ENCODE measurements at regions of chr1 and their contacts with region 1.

Region 1: GRCh38 chr1:28877132-28877781 is 37.1 kb upstream of the EPB41 start:
- DNase-seq: peak; percentile 89

Region 2: GRCh38 chr1:28359592-28360239 is 517.5 kb before region 1 on chr1:
- intact Hi-C with region 1: loop called in 1 of 2 experiments (anchors 10 kb)
- DNase-seq: peak; percentile 86

Region 3: DNA sequence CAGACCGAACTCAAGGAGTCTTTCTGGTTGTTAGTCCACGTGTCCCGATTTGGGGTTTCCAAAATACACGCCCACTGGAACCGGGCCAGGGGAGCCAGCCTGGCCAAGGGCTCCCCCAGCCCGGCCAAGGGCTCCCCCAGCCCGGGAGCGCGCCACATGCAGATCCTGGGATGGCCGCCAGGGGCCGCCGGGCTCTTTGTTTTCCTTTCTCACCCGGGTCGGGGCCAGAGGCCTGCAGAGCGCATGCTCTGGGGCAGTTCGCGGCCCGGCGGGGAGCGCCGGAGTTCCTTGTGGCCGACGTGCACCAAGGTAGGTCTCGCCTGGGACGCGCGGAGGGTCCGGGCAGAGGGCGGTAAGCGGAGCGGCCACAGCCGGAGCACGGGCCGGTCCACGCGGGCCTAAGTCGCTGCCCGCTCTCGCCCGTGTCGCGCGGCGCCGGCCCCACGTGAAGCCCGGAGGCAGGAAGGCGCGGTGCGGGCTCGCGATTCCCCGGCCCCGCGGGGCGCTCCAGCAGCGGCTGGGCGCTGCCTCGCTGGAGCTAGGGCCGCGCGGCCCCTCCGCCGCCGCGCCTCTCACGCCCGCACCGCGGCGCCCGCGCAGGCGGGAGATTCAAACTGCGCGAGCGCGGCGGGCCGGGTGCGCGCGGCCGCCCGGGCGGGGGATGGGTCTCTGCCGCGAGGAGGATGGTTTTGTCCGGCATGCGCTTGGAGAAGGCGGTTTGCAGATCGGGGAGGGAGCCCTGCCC is 359.1 kb before region 1 on chr1:
- intact Hi-C with region 1: no loop called
- DNase-seq: peak; percentile 96

Region 4: DNA sequence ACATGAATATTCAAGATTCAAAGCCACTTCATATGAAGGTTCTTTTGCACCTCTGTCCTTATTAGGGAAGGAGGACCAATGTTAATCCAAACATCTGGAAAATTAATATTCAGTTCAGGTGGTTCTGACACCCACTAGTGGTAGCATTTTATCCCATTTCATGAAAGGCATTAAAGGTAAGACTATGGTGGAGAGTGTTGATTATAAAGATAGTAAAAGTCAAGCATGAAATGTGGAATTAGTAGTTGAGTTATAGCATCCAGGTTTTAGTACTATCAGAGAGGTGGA is 158.0 kb before region 1 on chr1:
- intact Hi-C with region 1: no loop called
- DNase-seq: no peak

Region 5: GRCh38 chr1:28792644-28793121 is 84.6 kb before region 1 on chr1:
- intact Hi-C with region 1: loop called (anchors 5 to 10 kb)
- DNase-seq: no peak

Region 6: GRCh38 chr1:28914228-28915030 is 37.2 kb after region 1 on chr1 and contains the start of gene EPB41:
- intact Hi-C with region 1: no loop called
- DNase-seq: peak; percentile 95
- total RNA-seq, gene EPB41: 16.6 to 21.7 TPM

Region 7: DNA sequence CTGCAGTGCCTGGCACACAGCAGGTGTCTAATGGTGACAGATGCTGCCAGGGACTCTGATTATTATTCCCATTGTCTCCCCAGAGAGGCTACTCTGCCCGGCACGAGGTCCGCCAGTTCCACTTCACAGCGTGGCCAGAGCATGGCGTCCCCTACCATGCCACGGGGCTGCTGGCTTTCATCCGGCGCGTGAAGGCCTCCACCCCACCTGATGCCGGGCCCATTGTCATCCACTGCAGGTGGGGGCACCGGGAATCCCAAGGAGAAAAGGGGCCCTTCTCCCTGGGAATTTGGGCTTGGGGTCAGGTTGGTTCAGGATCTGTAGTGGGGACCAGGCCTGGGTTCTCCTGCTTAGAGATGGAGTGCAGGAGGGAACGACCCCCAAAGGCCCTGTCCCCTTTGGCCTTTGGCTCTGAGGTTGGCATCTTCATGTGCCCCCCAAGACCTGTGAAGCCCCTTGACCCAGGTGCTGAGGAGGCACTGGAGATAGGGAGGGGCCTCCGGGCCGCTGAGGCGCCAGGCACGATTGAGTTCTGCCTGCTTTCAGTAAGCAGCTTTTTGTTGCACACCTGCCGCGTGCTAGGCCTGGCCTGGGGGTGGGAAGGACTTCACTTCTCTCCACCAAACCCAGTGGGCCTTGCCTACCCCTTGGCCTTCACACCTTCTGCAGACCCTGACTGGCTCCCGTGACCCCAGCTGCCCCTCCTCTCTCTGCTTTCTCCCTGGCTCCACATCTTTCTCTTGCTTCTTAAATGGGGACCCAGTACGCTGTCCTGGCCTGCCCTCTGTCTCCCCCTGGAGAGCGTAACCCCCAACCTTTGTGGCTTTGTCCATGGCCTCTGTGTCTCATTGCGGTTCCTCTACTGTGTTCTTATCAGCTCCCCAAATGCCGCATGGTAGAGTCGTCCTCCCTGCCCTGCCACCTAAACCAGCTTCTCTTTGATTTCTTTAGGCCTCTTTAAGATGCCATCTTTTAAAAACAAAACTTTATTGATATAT is 435.5 kb after region 1 on chr1:
- intact Hi-C with region 1: no loop called
- DNase-seq: peak; percentile 68